ENCODE measurements at regions of chr6 and their contacts with region 1.

Region 1: DNA sequence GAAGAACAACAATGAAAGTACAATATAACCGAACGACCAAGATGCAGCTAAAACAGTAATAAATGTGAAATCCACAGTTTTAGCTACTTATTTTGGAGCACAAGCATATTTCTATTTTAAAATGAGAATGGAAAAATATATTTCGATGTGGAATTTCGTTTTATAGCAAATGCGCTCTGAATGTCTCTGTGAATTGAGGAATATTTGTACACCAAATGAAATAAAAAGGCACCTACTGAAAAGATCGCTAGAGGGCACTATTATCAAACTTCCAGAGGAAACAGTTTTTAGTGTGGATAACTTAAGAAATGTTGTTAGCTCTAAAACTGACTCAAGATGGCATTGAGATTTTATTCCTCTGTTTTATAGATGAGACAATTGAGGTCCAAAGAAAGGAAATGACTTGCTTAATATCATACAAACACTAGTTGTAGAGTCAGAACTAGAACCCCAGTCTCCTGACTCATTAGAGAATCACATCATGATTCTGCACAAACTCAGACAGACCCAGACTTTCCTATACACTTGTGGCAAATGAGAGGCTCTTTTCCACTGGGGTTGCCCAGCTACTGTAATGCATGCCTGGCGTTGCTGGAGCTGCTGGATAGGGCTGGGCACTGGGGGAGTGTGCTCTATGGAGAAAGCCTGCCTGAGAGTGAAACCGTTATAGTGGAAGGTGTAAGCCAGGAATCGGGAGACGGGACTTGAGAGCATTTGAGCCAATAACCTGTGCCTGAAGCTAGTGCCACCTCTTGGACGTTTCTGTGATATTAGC is 51.9 kb downstream of the GCLC start:
- DNase-seq: peak in 1 of 35 experiments; percentile 66
- ATAC-seq: peak; percentile 47 to 58 (median 50)
- H3K4me3 ChIP-seq: no peak overlapping the region
- H3K4me3 Mint-ChIP-seq: no peak overlapping the region
- H3K27ac ChIP-seq: no peak overlapping the region
- H3K27ac Mint-ChIP-seq: no peak overlapping the region
- H3K4me1 ChIP-seq: peaks cover 0 to 2% of the 10 kb centered on the region in 2 experiments
- H3K4me1 Mint-ChIP-seq: peaks cover 0 to 5% (median 2%) of the 10 kb centered on the region in 3 donors
- H3K27me3 ChIP-seq: peaks cover 0 to 2% of the 10 kb centered on the region in 2 experiments
- H3K27me3 Mint-ChIP-seq: peaks cover 7 to 25% of the 10 kb centered on the region in 2 donors

Region 2: DNA sequence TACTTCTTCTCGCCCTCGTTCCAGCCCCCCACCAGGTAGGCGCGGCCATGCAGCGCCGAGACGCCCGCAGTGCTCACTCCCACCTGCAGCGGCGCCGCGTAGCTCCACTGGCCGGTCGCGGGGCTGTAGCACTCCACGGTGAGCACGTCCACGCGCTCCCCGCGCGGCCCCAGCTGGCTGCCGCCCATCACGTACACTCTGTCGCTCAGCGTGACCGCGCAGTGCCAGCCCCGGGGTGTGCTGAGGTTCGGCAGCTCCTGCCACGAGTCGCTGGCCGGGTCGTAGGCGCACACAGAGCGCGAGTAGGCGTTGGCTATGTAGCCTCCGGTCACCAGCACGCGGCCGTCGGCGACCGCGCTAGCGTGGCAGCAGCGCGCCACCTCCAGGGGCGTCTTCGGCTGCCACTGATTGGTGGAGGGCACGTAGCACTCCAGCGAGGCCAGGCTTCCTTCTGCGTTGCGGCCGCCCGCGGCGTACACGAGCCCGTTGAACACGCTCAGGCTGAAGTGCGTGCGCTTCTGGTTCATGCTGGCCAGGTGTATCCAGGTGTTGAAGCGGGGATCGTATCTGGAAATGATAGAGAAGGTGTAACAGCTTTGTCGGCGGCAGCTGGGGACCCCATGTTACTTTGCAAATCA is 158.8 kb after region 1 on chr6:
- CTCF ChIA-PET with region 1: interaction called, 28 to 44 read pairs
- POLR2A ChIA-PET with region 1: no interaction called
- DNase-seq: peak; percentile 60 to 87 (median 75)
- ATAC-seq: peak; percentile 91 to 94 (median 91)
- H3K4me3 ChIP-seq: peak overlapping the region; percentile 60 to 84
- H3K4me3 Mint-ChIP-seq: peak overlapping the region; percentile 85 to 96 (median 95)
- H3K27ac ChIP-seq: peak overlapping the region; percentile 60
- H3K27ac Mint-ChIP-seq: peak overlapping the region; percentile 90 to 95
- H3K4me1 ChIP-seq: peaks cover 6 to 16% of the 10 kb centered on the region in 2 experiments
- H3K4me1 Mint-ChIP-seq: peaks cover 21 to 35% (median 28%) of the 10 kb centered on the region in 3 donors
- H3K27me3 ChIP-seq: peaks cover 4 to 5% of the 10 kb centered on the region in 2 experiments
- H3K27me3 Mint-ChIP-seq: no peaks in the 10 kb centered on the region

Region 3: GRCh38 chr6:53718597-53719460 is 225.8 kb after region 1 on chr6:
- CTCF ChIA-PET with region 1: interaction called, 54 to 141 read pairs
- POLR2A ChIA-PET with region 1: interaction called in 1 of 2 experiments, 9 read pairs
- DNase-seq: peak in 6 of 35 experiments; percentile 2 to 71 (median 18)
- ATAC-seq: peak in 3 of 4 experiments; percentile 46 to 66 (median 54)
- H3K4me3 ChIP-seq: no peak overlapping the region
- H3K4me3 Mint-ChIP-seq: no peak overlapping the region
- H3K27ac ChIP-seq: no peak overlapping the region
- H3K27ac Mint-ChIP-seq: no peak overlapping the region
- H3K4me1 ChIP-seq: no peaks in the 10 kb centered on the region
- H3K4me1 Mint-ChIP-seq: peaks cover 2 to 6% (median 5%) of the 10 kb centered on the region in 3 donors
- H3K27me3 ChIP-seq: no peaks in the 10 kb centered on the region
- H3K27me3 Mint-ChIP-seq: peaks cover 0 to 17% of the 10 kb centered on the region in 2 donors

Region 4: DNA sequence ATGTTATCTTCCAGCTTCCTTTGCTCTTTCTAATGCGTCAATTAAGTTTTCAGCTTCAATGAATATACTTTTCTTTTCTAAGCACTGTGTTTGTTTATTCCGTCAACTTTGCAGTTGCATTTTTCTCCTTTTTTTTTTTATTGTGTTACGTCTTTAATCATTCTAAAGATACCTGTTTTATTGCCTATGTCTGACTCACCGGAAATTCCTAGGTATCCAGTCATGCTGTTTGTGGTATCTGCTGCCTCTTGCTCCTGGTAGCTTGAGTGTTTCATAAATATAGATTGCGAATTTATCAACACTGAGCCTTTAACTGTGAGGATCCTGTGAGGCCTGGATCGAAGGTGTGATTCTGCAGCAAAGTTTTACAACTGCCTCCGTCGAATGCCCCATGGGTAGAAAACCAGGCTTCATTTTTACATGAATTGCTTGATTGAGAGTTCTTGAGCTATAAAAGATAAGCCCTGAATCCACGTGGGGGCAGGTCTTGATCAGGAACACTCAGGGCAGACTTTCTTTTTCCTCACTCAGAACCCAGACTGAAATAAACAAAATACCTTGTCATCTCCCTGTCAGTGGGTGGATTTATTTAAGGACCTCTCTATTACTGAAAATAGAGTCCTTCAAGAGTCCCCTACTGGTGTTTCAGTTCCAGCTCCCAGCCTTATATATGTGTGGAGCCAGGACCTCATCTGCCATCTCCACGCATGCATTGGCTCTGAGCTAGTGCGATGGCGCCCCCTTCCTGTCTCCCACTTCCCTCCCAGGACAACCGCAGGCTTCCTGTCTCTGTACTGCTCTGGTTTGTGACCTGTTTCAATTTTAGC is 241.6 kb after region 1 on chr6:
- CTCF ChIA-PET with region 1: interaction called, 46 to 141 read pairs
- POLR2A ChIA-PET with region 1: no interaction called
- DNase-seq: peak in 14 of 35 experiments; percentile 3 to 40 (median 15)
- ATAC-seq: peak in 2 of 4 experiments; percentile 50 to 68
- H3K4me3 ChIP-seq: no peak overlapping the region
- H3K4me3 Mint-ChIP-seq: peak overlapping the region in 1 of 3 donors; percentile 41
- H3K27ac ChIP-seq: no peak overlapping the region
- H3K27ac Mint-ChIP-seq: no peak overlapping the region
- H3K4me1 ChIP-seq: peaks cover 5 to 11% of the 10 kb centered on the region in 2 experiments
- H3K4me1 Mint-ChIP-seq: peaks cover 19 to 32% (median 25%) of the 10 kb centered on the region in 3 donors
- H3K27me3 ChIP-seq: no peaks in the 10 kb centered on the region
- H3K27me3 Mint-ChIP-seq: peaks cover 0 to 5% of the 10 kb centered on the region in 2 donors

Measured in T-cell (primary cell).